PC-3 (cell line): ENCODE measurements at regions of chr1 and their contacts with region 1.

Region 1: GRCh38 chr1:85321237-85321964 is 45.0 kb upstream of the BCL10 start:
- DNase-seq: peak; percentile 72
- ATAC-seq: 0 out of 2 replicates have a peak, but pooled peaks have one; percentile 23
- H3K4me3 ChIP-seq: no peak overlapping the region
- H3K27ac ChIP-seq: no peak overlapping the region
- H3K4me1 ChIP-seq: peaks cover 60% of the 10 kb centered on the region
- H3K27me3 ChIP-seq: no peaks in the 10 kb centered on the region
- CTCF ChIP-seq: no peak

Region 2: DNA sequence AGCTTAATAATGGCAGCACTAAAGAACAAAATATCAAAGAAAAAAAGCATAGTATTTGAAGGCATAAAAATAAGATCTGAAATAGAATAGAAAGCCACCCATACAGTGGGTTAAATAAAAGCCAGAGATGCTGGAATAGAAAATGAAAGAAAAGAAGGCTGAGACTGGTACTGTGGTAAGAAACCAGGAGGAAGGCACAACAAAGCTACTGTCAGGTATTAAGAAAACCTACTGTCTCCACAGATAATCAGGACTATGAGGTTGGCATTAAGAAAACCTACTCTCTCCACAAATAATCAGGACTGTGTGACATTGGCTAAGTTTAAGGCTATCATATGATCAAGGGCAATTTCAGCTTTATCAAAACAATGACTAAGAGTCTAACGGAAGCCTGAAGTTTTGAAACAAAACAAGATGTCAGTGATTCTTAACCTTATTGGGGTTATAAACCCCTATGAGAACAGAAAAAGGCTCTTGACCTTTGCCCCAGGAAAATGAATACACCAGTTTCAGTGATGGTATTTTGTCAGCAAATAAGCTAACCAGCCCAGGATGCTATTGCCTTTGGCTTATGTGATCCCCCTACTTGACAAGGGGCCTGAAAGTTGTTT is 348.9 kb before region 1 on chr1:
- CTCF ChIA-PET with region 1: interaction called, 10 read pairs
- POLR2A ChIA-PET with region 1: no interaction called
- intact Hi-C with region 1: no loop called
- DNase-seq: no peak
- ATAC-seq: no peak
- H3K4me3 ChIP-seq: no peak overlapping the region
- H3K27ac ChIP-seq: no peak overlapping the region
- H3K4me1 ChIP-seq: no peaks in the 10 kb centered on the region
- H3K27me3 ChIP-seq: no peaks in the 10 kb centered on the region
- CTCF ChIP-seq: no peak

Region 3: DNA sequence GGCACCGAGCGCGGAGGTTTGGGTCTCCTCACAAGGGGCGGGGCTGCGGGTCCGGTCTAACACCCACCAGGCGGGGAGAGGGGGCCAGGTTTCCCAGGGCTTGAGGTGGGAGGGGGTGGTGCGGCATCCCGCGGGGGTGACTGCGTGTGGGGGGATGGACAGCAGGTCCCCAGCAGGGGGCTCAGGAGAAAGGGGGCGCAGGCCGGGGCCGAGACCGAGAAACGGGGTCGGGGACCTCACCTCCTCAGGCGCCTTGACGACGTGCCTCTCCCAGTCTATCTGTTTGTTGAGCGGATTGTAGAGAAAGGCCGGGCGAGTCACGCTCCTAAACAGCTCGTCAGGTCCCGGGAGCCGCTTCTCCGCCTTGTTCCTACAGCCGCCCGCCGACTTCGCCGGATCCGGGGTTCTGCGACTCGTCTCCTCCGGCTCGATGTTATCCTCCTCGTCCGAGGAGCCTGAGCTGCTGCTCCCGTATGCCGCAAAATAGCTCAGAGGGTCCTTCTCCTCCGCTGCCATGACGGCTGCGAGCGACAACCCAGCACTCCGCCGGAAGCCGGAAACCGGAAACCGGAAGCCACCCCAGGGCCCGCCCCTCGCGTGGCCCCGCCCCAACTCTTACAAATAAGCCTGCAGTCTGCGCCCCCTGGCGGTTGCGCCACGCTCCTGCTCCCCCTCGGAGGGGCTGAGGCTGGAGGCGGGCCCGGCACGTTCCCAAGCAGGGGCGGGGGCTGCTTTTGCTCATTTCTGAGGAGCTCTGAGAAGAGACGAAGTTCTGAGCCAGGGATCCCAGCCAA is 62.1 kb before region 1 on chr1 and contains the start of gene C1orf52:
- CTCF ChIA-PET with region 1: no interaction called
- POLR2A ChIA-PET with region 1: no interaction called
- intact Hi-C with region 1: no loop called
- DNase-seq: peak; percentile 94
- ATAC-seq: peak; percentile 82
- H3K4me3 ChIP-seq: peak within 1 kb of the TSS; percentile 97
- H3K27ac ChIP-seq: peak within 1 kb of the TSS; percentile 49
- H3K4me1 ChIP-seq: peaks cover 27% of the 10 kb centered on the region
- H3K27me3 ChIP-seq: no peaks in the 10 kb centered on the region
- CTCF ChIP-seq: peak; percentile 90
- total RNA-seq, gene C1orf52: 59.9 and 61.0 TPM in 2 replicates

Region 4: GRCh38 chr1:85360730-85361493 is 39.5 kb after region 1 on chr1:
- CTCF ChIA-PET with region 1: no interaction called
- POLR2A ChIA-PET with region 1: no interaction called
- intact Hi-C with region 1: no loop called
- DNase-seq: peak; percentile 83
- ATAC-seq: peak; percentile 70
- H3K4me3 ChIP-seq: 0 out of 2 replicates have a peak overlapping the region, but pooled peaks have one; percentile 5
- H3K27ac ChIP-seq: peak overlapping the region; percentile 84
- H3K4me1 ChIP-seq: peaks cover 41% of the 10 kb centered on the region
- H3K27me3 ChIP-seq: no peaks in the 10 kb centered on the region
- CTCF ChIP-seq: no peak

Region 5: DNA sequence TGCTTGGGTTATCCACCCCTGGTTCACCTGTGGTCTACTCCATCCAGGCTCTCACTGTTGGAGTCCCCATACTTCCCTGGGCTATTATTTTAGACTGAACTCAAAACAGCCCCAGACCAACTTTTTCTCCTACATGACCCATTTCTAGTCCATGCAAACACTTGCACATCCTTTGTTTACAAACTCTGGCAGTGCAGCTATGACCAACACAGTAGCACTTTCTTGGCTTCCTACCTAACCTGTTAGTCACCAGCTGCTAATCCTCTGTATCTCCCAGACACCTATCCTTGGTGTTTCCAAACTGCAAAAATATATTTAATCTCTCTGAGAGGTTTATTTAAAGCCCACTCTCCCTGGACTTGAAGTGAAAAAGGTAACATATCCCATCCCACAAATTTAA is 52.8 kb after region 1 on chr1:
- CTCF ChIA-PET with region 1: no interaction called
- POLR2A ChIA-PET with region 1: no interaction called
- intact Hi-C with region 1: no loop called
- DNase-seq: peak; percentile 92
- ATAC-seq: peak; percentile 99
- H3K4me3 ChIP-seq: no peak overlapping the region
- H3K27ac ChIP-seq: no peak overlapping the region
- H3K4me1 ChIP-seq: peaks cover 35% of the 10 kb centered on the region
- H3K27me3 ChIP-seq: no peaks in the 10 kb centered on the region
- CTCF ChIP-seq: no peak